Aorta (tissue), 5 donors: ENCODE measurements at regions of chr2 and their contacts with region 1.

Region 1: DNA sequence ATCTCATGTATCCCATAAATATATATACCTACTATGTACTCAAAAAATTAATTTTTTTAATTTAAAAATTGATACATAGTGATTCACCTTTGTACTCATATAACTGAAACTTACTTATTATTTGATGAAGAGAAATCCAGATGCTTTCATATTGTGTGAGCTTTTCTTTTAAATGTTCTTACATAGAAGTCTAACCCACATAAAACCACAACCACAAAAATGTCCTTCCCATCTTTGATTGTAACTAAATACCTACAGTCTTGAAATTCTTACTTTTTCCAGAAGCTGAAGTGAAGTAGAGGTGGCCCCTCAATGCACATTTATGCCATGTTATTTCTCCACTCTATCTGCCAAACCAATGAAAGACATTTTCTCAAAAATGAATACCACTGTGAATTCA is 117.9 kb upstream of the COL5A2 start:
- DNase-seq: no peak
- ATAC-seq: no peak
- H3K4me3 ChIP-seq: no peak overlapping the region
- H3K27ac ChIP-seq: no peak overlapping the region
- H3K4me1 ChIP-seq: peaks cover 0 to 2% of the 10 kb centered on the region in 2 donors
- H3K27me3 ChIP-seq: no peaks in the 10 kb centered on the region

Region 2: GRCh38 chr2:189337656-189338055 is 40.2 kb after region 1 on chr2:
- intact Hi-C with region 1: loop called in 1 of 2 experiments (anchors 5 kb)
- DNase-seq: no peak
- ATAC-seq: peak; percentile 86
- H3K4me3 ChIP-seq: no peak overlapping the region
- H3K27ac ChIP-seq: no peak overlapping the region
- H3K4me1 ChIP-seq: peaks cover 0 to 2% of the 10 kb centered on the region in 2 donors
- H3K27me3 ChIP-seq: no peaks in the 10 kb centered on the region